Activated CD4-positive, alpha-beta T cell treated with anti-CD3 and anti-CD28 coated beads, Interleukin-2, amount 10 ng/mL, durations not matched to agents 24 days and 14 days (primary cell): ENCODE measurements at regions of chr2 and their contacts with region 1.

Region 1: DNA sequence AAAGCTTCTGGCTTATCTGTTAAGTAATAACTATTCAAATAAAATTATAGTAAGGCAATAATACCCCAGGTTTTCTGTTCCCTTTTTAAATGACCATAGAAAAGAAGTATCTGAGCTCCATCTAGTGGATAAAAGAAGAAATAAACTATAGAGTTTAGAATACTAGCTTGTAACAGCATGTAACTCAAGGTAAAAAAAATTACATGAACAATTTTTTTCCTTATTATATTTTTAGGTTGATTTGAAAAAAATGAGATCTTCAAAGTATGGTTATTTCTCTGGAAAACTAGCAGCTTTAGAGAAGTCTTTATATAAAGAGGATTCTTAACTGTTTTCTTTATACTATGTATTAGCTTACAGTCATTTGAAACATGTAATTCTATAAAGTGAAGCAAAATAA is 58.1 kb downstream of the NCKAP1 start:
- DNase-seq: no peak
- H3K4me3 Mint-ChIP-seq: no peak overlapping the region
- H3K27ac Mint-ChIP-seq: no peak overlapping the region
- H3K4me1 Mint-ChIP-seq: no peaks in the 10 kb centered on the region
- H3K27me3 Mint-ChIP-seq: no peaks in the 10 kb centered on the region

Region 2: DNA sequence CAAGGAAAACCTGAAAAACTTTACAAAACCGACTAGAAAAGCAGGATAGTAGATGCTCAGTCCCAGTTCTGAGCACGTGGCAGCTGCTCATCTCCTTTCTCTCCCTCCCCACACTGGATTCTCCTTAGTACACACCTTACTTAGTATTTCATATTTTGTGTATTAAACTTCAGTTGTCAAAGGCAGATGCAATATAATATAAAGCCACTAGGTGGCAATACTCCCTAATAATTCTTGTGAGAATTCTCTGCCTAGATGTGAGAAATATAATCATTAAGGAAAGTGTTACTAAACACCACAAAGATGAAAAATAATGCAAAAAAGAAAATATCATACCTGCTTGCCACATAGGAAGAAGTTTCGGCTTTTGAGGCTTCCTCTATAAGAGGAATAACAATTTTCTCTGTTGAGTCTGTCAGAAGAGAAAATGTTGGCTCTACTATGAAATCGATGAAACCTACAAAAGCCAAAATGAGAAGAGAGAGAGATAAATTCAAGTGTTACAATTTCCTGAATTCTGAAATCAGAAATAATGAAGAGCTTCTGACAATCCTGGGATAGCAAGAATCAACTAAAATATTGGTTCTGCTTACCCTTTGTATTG is 793.9 kb before region 1 on chr2:
- intact Hi-C with region 1: loop called (anchors 5 kb)
- DNase-seq: no peak
- H3K4me3 Mint-ChIP-seq: no peak overlapping the region
- H3K27ac Mint-ChIP-seq: no peak overlapping the region
- H3K4me1 Mint-ChIP-seq: no peaks in the 10 kb centered on the region
- H3K27me3 Mint-ChIP-seq: peaks cover 16% of the 10 kb centered on the region

Region 3: DNA sequence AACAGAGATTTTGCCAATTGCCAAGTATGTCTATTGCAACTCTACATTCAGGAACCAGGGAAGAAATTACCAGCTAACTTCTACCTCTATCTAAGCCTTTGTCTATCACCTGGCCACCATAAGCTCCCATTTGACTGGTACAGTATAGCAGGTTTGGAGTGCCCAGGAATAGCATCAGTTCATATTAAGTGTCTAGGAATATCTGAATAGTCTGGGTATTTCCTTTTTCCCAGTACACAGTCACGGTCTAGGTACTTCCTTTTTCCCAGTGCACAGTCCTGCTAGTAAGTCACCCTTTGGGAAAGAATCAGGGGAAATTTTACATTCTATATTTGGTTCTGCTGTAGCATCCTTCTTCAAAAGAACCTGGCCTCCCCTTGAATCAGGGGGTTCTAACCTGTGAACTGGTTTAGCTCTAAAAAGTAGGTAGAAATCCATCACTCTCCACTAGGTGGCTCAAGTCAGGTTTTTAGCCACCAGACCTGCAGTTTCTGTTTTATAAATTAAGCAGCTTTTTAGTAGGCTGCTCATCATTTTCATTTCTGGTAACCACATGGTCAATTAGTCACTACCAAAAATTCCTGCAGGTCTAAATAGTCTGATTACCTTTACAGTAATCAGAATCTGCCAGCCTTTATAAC is 313.3 kb before region 1 on chr2:
- intact Hi-C with region 1: loop called (anchors 1 kb)
- DNase-seq: peak; percentile 73
- H3K4me3 Mint-ChIP-seq: no peak overlapping the region
- H3K27ac Mint-ChIP-seq: no peak overlapping the region
- H3K4me1 Mint-ChIP-seq: peaks cover 3% of the 10 kb centered on the region
- H3K27me3 Mint-ChIP-seq: peaks cover 8% of the 10 kb centered on the region

Region 4: GRCh38 chr2:182763311-182763912 is 216.7 kb before region 1 on chr2:
- intact Hi-C with region 1: loop called (anchors 5 kb)
- DNase-seq: peak; percentile 60
- H3K4me3 Mint-ChIP-seq: no peak overlapping the region
- H3K27ac Mint-ChIP-seq: no peak overlapping the region
- H3K4me1 Mint-ChIP-seq: peaks cover 7% of the 10 kb centered on the region
- H3K27me3 Mint-ChIP-seq: no peaks in the 10 kb centered on the region

Region 5: DNA sequence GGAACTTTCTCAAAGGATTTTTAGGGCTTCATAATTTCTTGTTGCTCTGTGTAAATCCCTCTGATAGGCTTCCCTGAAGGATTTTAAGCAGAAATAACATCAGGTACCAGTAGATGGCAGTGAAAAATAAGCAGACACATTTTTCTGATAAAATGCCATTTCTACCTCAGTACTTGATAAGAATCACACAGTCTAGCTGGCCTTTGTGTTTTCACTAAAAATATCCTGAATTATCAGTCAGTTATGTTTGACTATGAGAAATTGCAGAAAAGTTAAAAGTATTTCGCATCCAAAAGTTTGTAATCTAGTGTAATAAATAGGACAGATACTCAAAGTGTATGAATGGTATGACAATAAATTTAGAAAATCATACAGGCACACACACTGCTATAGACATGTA is 195.3 kb before region 1 on chr2:
- intact Hi-C with region 1: loop called (anchors 5 kb)
- DNase-seq: no peak
- H3K4me3 Mint-ChIP-seq: no peak overlapping the region
- H3K27ac Mint-ChIP-seq: no peak overlapping the region
- H3K4me1 Mint-ChIP-seq: no peaks in the 10 kb centered on the region
- H3K27me3 Mint-ChIP-seq: no peaks in the 10 kb centered on the region

Region 6: DNA sequence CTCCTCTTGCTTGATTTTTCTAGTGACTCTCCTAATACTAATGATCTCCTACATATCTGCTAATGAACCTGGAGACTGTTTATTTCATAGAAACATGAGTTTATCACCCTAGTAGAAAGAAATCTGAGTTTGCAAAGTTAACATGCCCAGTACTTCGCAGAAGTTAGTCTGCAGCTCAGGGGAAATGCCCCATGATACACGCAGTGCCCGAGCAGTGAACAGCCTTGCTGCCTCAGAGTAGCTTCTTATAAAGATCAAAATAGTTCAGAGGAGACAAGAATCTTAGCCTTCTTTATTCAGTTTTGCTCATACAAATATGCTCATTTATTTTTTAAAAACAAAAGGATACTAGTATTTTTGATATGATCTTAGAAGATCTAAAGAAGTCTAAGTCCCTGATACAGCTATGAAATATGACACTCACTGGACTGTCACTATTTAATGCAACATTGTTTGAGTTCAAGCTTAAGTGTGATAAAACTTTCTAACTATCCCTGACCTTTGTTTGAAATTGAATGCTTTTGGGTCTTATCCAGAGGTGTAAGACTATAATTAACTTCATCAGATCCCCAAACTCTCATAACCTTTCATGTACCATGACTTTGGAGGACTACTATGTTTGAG is 134.2 kb before region 1 on chr2:
- intact Hi-C with region 1: no loop called
- DNase-seq: no peak
- H3K4me3 Mint-ChIP-seq: no peak overlapping the region
- H3K27ac Mint-ChIP-seq: no peak overlapping the region
- H3K4me1 Mint-ChIP-seq: no peaks in the 10 kb centered on the region
- H3K27me3 Mint-ChIP-seq: peaks cover 31% of the 10 kb centered on the region